ENCODE measurements at regions of chr7 and their contacts with region 1.

Region 1: DNA sequence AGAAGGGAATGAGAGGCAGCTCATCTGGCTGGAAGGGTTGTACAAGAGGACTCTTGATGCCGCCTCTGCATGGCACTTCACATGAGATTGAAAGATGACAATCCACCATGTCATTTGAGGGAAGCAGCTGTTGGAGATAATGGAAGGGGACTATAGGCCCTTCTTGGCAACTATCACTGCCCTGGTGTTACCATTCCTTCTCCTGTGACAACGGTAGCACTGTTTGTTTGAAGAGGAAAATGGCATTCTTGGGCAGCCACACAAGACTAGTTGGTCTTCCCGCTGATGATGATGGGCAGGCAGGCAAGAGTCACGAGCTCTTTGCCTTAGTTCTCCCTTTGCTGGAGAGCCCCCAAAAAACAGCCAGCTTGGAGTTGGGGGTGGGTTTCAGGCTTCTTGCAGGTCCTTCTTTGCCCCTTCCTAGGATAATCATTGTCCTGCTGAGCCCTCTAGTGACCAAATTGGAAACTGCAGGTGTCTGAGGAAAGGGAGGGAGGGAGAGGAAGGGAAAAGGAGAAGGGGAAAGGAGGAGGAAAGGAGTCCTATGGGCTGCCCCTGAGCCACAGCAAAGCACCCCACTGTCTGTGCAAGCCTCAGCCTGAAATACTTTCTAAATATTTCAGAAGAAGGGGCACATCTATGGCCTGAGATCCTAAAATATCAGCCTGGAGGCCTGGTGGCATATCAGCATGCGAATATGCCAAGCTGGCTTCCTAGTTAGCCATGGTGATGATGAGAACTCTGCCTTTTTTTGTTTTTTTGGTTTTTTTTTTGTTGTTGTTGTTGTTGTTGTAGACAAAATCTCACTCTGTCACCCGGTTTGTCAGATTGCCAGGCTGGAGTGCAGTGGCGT is 165.6 kb upstream of the KMT2E start:
- DNase-seq: no peak
- ATAC-seq: peak in 2 of 4 donors; percentile 45 to 59
- H3K4me3 ChIP-seq: no peak overlapping the region
- H3K27ac ChIP-seq: no peak overlapping the region
- H3K4me1 ChIP-seq: no peaks in the 10 kb centered on the region
- H3K27me3 ChIP-seq: peaks cover 0 to 15% (median 0%) of the 10 kb centered on the region in 3 donors
- CTCF ChIP-seq: peak; percentile 76

Region 2: GRCh38 chr7:103573479-103574058 is 1274.8 kb before region 1 on chr7:
- intact Hi-C with region 1: loop called in 1 of 2 experiments (anchors 5 kb)
- DNase-seq: no peak
- ATAC-seq: no peak
- H3K4me3 ChIP-seq: no peak overlapping the region
- H3K27ac ChIP-seq: no peak overlapping the region
- H3K4me1 ChIP-seq: no peaks in the 10 kb centered on the region
- H3K27me3 ChIP-seq: no peaks in the 10 kb centered on the region
- CTCF ChIP-seq: peak; percentile 57

Region 3: GRCh38 chr7:104231054-104232046 is 617.0 kb before region 1 on chr7:
- intact Hi-C with region 1: loop called (anchors 2 to 5 kb)
- DNase-seq: no peak
- ATAC-seq: peak in 3 of 4 donors; percentile 49 to 82 (median 62)
- H3K4me3 ChIP-seq: no peak overlapping the region
- H3K27ac ChIP-seq: no peak overlapping the region
- H3K4me1 ChIP-seq: no peaks in the 10 kb centered on the region
- H3K27me3 ChIP-seq: no peaks in the 10 kb centered on the region
- CTCF ChIP-seq: peak; percentile 78

Region 4: DNA sequence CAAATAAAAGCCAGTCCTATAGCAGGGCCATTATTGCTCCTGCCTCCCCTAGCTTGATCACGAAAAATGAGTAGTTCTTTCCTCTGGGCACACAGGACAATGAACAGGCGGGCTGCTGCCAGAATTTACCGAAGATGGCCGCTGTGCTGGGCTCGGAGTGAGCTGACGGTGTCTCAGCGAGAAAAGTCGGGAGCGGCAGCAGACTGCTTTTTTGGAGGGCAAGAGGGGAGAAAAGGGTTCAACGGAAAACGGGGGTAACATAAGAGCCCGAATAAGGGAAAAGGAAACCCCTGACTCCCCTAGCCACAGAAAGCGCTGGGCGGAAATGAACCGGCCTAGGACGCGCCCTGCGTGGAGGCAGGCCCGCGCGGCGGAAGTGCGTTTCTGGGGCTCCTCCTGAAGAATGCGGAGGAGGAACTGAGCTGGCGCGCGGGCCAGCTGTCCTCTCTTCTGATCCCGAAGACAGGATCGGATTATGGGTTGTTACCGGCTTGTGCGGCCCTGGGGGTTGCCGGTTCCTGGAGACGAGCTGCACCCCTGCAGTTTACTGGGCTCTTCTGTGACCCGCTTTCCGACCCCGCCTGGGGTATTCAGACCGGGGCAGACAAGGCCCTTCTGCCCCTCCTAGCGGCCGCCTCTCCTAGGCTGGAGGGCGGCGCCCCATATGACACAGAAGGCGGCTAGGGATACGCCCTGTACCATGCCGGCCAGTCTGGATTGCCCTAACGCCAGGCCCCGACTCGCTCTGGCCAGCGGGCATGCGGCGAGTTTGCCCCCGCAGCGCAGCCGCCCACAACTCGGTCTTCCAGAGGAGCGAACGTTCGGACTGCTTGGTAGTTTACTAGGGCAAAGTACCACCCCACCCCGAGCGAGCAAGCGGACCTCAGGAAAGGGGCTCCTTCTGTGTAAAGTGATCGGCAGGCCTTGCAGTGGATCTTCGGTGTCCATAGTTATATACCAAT is 135.5 kb after region 1 on chr7:
- intact Hi-C with region 1: no loop called
- DNase-seq: peak; percentile 90 to 94
- ATAC-seq: peak; percentile 89 to 91 (median 90)
- H3K4me3 ChIP-seq: peak overlapping the region; percentile 69
- H3K27ac ChIP-seq: no peak overlapping the region
- H3K4me1 ChIP-seq: peaks cover 42% of the 10 kb centered on the region
- H3K27me3 ChIP-seq: no peaks in the 10 kb centered on the region
- CTCF ChIP-seq: peak; percentile 58